ENCODE measurements at regions of chrX and their contacts with region 1.

Region 1: DNA sequence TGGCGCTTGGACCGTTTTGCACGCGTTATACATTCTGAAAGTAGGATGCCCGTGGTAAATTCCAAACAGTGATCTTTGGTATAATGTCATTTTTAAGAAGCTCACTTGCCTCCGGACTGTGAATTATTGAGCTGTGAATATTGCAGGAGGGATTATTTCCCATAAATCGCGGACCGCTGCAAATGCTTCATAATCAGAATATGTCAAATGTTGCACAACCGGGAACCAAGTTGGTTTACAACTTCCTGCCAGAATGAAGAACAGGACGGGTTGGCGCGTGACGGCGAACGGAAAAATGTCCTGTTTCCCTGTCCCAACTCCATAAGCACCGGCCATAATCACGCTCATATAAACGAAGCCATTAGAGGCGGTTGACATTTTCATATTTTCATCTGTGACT is 67.6 kb downstream of the SHOX start:
- DNase-seq: no peak
- H3K4me3 ChIP-seq: no peak overlapping the region
- H3K27ac ChIP-seq: no peak overlapping the region
- H3K4me1 ChIP-seq: no peaks in the 10 kb centered on the region
- H3K27me3 ChIP-seq: no peaks in the 10 kb centered on the region
- CTCF ChIP-seq: no peak

Region 2: GRCh38 chrX:776532-777280 is 78.5 kb after region 1 on chrX:
- CTCF ChIA-PET with region 1: no interaction called
- dilution Hi-C with region 1: loop called (anchors 5 kb)
- in situ Hi-C with region 1: no loop called
- intact Hi-C with region 1: no loop called
- DNase-seq: no peak
- H3K4me3 ChIP-seq: no peak overlapping the region
- H3K27ac ChIP-seq: no peak overlapping the region
- H3K4me1 ChIP-seq: no peaks in the 10 kb centered on the region
- H3K27me3 ChIP-seq: no peaks in the 10 kb centered on the region
- CTCF ChIP-seq: no peak

Region 3: DNA sequence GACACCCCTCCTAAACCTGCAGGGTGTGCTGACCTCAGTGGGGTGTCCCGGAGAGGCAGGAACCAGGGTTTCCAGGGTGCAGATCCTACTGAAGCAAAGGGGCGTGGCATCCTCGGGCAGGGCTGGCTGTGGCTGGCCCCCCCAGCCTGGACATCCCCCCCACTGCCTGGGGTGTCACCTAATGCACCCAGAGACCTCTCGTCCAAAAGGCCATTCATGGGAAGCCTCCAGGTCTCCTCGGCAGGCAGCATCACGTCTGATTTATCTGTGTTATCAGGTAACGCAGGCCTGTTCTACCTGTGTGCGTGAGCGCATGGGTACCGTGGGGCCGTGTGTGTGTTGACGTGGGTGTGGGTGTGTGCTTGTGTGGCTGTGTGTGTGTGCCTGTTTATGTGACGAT is 142.3 kb after region 1 on chrX:
- CTCF ChIA-PET with region 1: no interaction called
- dilution Hi-C with region 1: no loop called
- in situ Hi-C with region 1: no loop called
- intact Hi-C with region 1: no loop called
- DNase-seq: no peak
- H3K4me3 ChIP-seq: no peak overlapping the region
- H3K27ac ChIP-seq: no peak overlapping the region
- H3K4me1 ChIP-seq: no peaks in the 10 kb centered on the region
- H3K27me3 ChIP-seq: no peaks in the 10 kb centered on the region
- CTCF ChIP-seq: no peak